T-cell (primary cell): ENCODE measurements at regions of chr1 and their contacts with region 1.

Region 1: GRCh38 chr1:45351508-45351907 is 11.3 kb upstream of the MUTYH start:
- DNase-seq: no peak
- ATAC-seq: no peak
- H3K4me3 ChIP-seq: no peak overlapping the region
- H3K4me3 Mint-ChIP-seq: no peak overlapping the region
- H3K27ac ChIP-seq: no peak overlapping the region
- H3K27ac Mint-ChIP-seq: no peak overlapping the region
- H3K4me1 ChIP-seq: no peaks in the 10 kb centered on the region
- H3K4me1 Mint-ChIP-seq: no peaks in the 10 kb centered on the region
- H3K27me3 ChIP-seq: no peaks in the 10 kb centered on the region
- H3K27me3 Mint-ChIP-seq: no peaks in the 10 kb centered on the region

Region 2: GRCh38 chr1:44924835-44925513 is 426.5 kb before region 1 on chr1:
- CTCF ChIA-PET with region 1: no interaction called
- POLR2A ChIA-PET with region 1: no interaction called
- DNase-seq: peak in 1 of 35 experiments; percentile 12
- ATAC-seq: no peak
- H3K4me3 ChIP-seq: no peak overlapping the region
- H3K4me3 Mint-ChIP-seq: no peak overlapping the region
- H3K27ac ChIP-seq: no peak overlapping the region
- H3K27ac Mint-ChIP-seq: no peak overlapping the region
- H3K4me1 ChIP-seq: no peaks in the 10 kb centered on the region
- H3K4me1 Mint-ChIP-seq: no peaks in the 10 kb centered on the region
- H3K27me3 ChIP-seq: no peaks in the 10 kb centered on the region
- H3K27me3 Mint-ChIP-seq: no peaks in the 10 kb centered on the region

Region 3: DNA sequence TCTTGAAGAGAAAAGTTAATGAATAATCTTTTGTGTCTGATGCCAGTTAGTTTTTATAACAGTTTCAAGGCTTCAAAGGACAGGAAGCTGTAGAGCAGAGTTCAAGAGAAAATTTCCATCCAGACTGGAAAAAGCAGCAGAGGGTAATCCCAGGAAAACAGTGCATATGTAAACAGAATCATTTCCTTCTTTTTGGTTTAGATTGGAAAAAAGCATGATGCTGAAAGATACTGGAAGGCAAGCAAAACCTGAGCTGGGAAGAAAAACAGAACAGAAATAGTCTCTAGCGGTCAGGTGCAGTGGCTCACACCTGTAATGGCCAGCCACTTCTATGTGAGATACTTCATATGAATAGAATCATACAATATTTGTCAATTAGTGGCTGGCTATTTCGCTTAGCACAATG is 217.0 kb before region 1 on chr1:
- CTCF ChIA-PET with region 1: no interaction called
- POLR2A ChIA-PET with region 1: interaction called in 1 of 2 experiments, 15 read pairs
- DNase-seq: no peak
- ATAC-seq: no peak
- H3K4me3 ChIP-seq: no peak overlapping the region
- H3K4me3 Mint-ChIP-seq: no peak overlapping the region
- H3K27ac ChIP-seq: no peak overlapping the region
- H3K27ac Mint-ChIP-seq: no peak overlapping the region
- H3K4me1 ChIP-seq: no peaks in the 10 kb centered on the region
- H3K4me1 Mint-ChIP-seq: peaks cover 0 to 9% (median 3%) of the 10 kb centered on the region in 3 donors
- H3K27me3 ChIP-seq: no peaks in the 10 kb centered on the region
- H3K27me3 Mint-ChIP-seq: no peaks in the 10 kb centered on the region

Region 4: GRCh38 chr1:45365051-45365450 is 13.5 kb after region 1 on chr1:
- CTCF ChIA-PET with region 1: no interaction called
- POLR2A ChIA-PET with region 1: no interaction called
- DNase-seq: no peak
- ATAC-seq: no peak
- H3K4me3 ChIP-seq: no peak overlapping the region
- H3K4me3 Mint-ChIP-seq: no peak overlapping the region
- H3K27ac ChIP-seq: no peak overlapping the region
- H3K27ac Mint-ChIP-seq: no peak overlapping the region
- H3K4me1 ChIP-seq: no peaks in the 10 kb centered on the region
- H3K4me1 Mint-ChIP-seq: peaks cover 2 to 3% (median 2%) of the 10 kb centered on the region in 3 donors
- H3K27me3 ChIP-seq: no peaks in the 10 kb centered on the region
- H3K27me3 Mint-ChIP-seq: no peaks in the 10 kb centered on the region